GM12878 (cell line): ENCODE measurements at regions of chr3 and their contacts with region 1.

Region 1: GRCh38 chr3:138915503-138916498 is 31.1 kb downstream of the FOXL2 start:
- DNase-seq: peak; percentile 34
- ATAC-seq: peak; percentile 97
- H3K4me3 ChIP-seq: peak overlapping the region; percentile 85
- H3K27ac ChIP-seq: peak overlapping the region; percentile 46; the same call in 1 of the 2 replicates
- H3K4me1 ChIP-seq: peaks cover 3% of the 10 kb centered on the region; the same call in 1 of the 2 replicates
- H3K27me3 ChIP-seq: peaks cover 0 to 4% of the 10 kb centered on the region in 2 experiments; a peak in 2 of 4 replicates
- CTCF ChIP-seq: peak; percentile 67 to 85 (median 82)
- EP300 ChIP-seq: no peak
- POLR2A ChIP-seq: 0 out of 2 replicates have a peak, but pooled peaks have one; percentile 25
- RAD21 ChIP-seq: peak; percentile 80

Region 2: DNA sequence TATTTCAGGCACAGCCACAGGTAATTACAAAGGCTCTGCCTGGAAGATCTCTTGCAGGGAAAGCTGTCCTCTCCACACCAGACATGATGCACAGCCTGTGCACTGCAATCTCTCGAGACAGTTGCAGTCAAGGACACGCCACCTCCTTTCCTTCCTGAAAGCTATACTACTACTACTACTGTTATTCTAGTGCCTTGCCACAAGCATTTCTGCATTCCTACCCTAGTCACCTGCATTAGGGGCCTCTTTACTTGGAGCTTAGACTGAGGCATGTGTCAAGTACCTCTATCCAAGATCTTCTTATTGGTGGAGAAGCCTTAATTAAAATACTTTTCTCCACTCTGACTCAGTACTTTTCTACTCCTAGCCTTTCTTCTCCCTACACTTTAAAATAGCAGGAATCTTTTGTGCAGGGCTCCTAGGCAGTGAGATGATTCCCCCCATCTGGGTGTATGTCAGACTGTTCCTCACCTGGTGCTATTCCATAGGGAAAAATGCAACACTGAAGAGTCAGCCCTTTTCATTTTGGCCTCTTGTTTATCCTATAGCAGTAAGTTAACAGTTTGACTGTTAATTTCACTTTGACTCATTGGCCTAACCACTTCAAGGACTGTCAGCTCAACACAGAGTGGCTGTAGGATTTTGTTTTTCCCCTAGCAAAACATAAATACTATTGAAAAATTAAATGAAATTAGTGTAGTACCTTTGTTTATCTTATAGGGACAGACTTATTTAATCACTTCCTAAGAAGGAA is 402.5 kb before region 1 on chr3:
- CTCF ChIA-PET with region 1: interaction called, 17 read pairs
- POLR2A ChIA-PET with region 1: no interaction called
- RAD21 ChIA-PET with region 1: interaction called, 4 read pairs
- SMC1A ChIA-PET with region 1: no interaction called
- in situ Hi-C with region 1: no loop called
- intact Hi-C with region 1: no loop called
- DNase-seq: peak; percentile 9
- ATAC-seq: peak; percentile 97
- H3K4me3 ChIP-seq: no peak overlapping the region
- H3K27ac ChIP-seq: no peak overlapping the region
- H3K4me1 ChIP-seq: peaks cover 3% of the 10 kb centered on the region; the same call in 1 of the 2 replicates
- H3K27me3 ChIP-seq: no peaks in the 10 kb centered on the region
- CTCF ChIP-seq: no peak
- EP300 ChIP-seq: peak in 1 of 2 experiments; percentile 80; a peak in 2 of 4 replicates
- POLR2A ChIP-seq: no peak
- RAD21 ChIP-seq: no peak

Region 3: GRCh38 chr3:138625707-138626365 is 290.0 kb before region 1 on chr3:
- CTCF ChIA-PET with region 1: interaction called, 4 read pairs
- POLR2A ChIA-PET with region 1: no interaction called
- RAD21 ChIA-PET with region 1: interaction called, 7 read pairs
- SMC1A ChIA-PET with region 1: interaction called, 10 read pairs
- in situ Hi-C with region 1: no loop called
- intact Hi-C with region 1: no loop called
- DNase-seq: peak; percentile 11
- ATAC-seq: peak; percentile 65
- H3K4me3 ChIP-seq: no peak overlapping the region
- H3K27ac ChIP-seq: no peak overlapping the region
- H3K4me1 ChIP-seq: peaks cover 4% of the 10 kb centered on the region; the same call in 1 of the 2 replicates
- H3K27me3 ChIP-seq: no peaks in the 10 kb centered on the region
- CTCF ChIP-seq: no peak
- EP300 ChIP-seq: no peak
- POLR2A ChIP-seq: no peak
- RAD21 ChIP-seq: no peak

Region 4: GRCh38 chr3:138705675-138706074 is 210.1 kb before region 1 on chr3:
- CTCF ChIA-PET with region 1: interaction called, 380 read pairs
- POLR2A ChIA-PET with region 1: no interaction called
- RAD21 ChIA-PET with region 1: interaction called, 146 read pairs
- SMC1A ChIA-PET with region 1: interaction called, 76 read pairs
- in situ Hi-C with region 1: no loop called
- intact Hi-C with region 1: no loop called
- DNase-seq: no peak
- ATAC-seq: no peak
- H3K4me3 ChIP-seq: no peak overlapping the region
- H3K27ac ChIP-seq: no peak overlapping the region
- H3K4me1 ChIP-seq: no peaks in the 10 kb centered on the region
- H3K27me3 ChIP-seq: no peaks in the 10 kb centered on the region
- CTCF ChIP-seq: no peak
- EP300 ChIP-seq: no peak
- POLR2A ChIP-seq: no peak
- RAD21 ChIP-seq: no peak

Region 5: DNA sequence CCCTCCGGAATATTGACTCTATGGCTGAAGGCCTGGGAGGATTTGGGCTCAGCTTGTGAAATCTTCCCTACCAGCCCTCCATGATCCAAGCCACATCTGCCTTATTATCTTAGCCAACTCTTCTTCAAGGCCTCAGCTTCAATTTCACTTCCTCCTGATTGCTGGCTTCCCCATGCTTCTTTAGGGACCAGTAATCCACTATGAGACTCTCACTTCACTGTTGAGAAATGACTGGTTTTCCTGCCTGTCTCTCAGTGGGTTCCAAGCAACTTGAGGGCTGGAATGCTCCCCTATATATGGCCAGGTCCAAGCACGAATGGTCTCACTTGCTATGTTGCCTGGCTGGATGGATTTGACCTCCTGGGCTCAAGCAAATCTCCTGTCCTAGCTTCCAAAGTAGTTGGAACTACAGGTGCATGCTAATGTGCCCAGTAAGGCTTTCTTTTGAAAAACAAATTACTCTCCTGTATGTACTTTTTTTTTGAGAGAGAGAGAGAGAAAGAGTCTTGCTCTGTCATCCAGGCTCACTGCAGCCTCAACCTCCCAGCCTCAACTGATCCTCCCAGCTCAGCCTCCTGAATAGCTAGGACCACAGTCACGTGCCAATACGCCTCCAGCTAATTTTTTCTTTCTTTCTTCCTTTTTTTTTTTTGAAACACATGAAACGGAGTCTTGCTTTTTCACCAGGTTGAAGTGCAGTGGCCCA is 73.2 kb before region 1 on chr3:
- CTCF ChIA-PET with region 1: interaction called, 12 read pairs
- POLR2A ChIA-PET with region 1: no interaction called
- RAD21 ChIA-PET with region 1: interaction called, 8 read pairs
- SMC1A ChIA-PET with region 1: interaction called, 5 read pairs
- in situ Hi-C with region 1: no loop called
- intact Hi-C with region 1: no loop called
- DNase-seq: peak; percentile 63
- ATAC-seq: peak; percentile 89
- H3K4me3 ChIP-seq: no peak overlapping the region
- H3K27ac ChIP-seq: peak overlapping the region; percentile 58
- H3K4me1 ChIP-seq: peaks cover 12% of the 10 kb centered on the region
- H3K27me3 ChIP-seq: no peaks in the 10 kb centered on the region
- CTCF ChIP-seq: no peak
- EP300 ChIP-seq: peak in 1 of 2 experiments; percentile 70; a peak in 1 of 4 replicates
- POLR2A ChIP-seq: no peak
- RAD21 ChIP-seq: no peak

Region 6: GRCh38 chr3:138960417-138960852 is 44.6 kb after region 1 on chr3:
- CTCF ChIA-PET with region 1: no interaction called
- POLR2A ChIA-PET with region 1: no interaction called
- RAD21 ChIA-PET with region 1: no interaction called
- SMC1A ChIA-PET with region 1: no interaction called
- in situ Hi-C with region 1: no loop called
- intact Hi-C with region 1: no loop called
- DNase-seq: no peak
- ATAC-seq: no peak
- H3K4me3 ChIP-seq: no peak overlapping the region
- H3K27ac ChIP-seq: no peak overlapping the region
- H3K4me1 ChIP-seq: no peaks in the 10 kb centered on the region
- H3K27me3 ChIP-seq: peaks cover 0 to 4% of the 10 kb centered on the region in 2 experiments; a peak in 2 of 4 replicates
- CTCF ChIP-seq: no peak
- EP300 ChIP-seq: no peak
- POLR2A ChIP-seq: no peak
- RAD21 ChIP-seq: no peak